Motor neuron (in vitro differentiated cells): ENCODE measurements at regions of chr7 and their contacts with region 1.

Region 1: GRCh38 chr7:156949541-156950380 is at the start of gene NOM1:
- ATAC-seq: peak; percentile 67 to 95 (median 93)
- H3K4me3 ChIP-seq: peak within 1 kb of the TSS; percentile 82 to 96 (median 85)
- H3K27ac ChIP-seq: peak within 1 kb of the TSS; percentile 62 to 88
- H3K4me1 ChIP-seq: peaks cover 5 to 16% of the 10 kb centered on the region in 2 donors
- total RNA-seq, gene NOM1: 7.2 to 44.4 (median 9.5) TPM

Region 2: DNA sequence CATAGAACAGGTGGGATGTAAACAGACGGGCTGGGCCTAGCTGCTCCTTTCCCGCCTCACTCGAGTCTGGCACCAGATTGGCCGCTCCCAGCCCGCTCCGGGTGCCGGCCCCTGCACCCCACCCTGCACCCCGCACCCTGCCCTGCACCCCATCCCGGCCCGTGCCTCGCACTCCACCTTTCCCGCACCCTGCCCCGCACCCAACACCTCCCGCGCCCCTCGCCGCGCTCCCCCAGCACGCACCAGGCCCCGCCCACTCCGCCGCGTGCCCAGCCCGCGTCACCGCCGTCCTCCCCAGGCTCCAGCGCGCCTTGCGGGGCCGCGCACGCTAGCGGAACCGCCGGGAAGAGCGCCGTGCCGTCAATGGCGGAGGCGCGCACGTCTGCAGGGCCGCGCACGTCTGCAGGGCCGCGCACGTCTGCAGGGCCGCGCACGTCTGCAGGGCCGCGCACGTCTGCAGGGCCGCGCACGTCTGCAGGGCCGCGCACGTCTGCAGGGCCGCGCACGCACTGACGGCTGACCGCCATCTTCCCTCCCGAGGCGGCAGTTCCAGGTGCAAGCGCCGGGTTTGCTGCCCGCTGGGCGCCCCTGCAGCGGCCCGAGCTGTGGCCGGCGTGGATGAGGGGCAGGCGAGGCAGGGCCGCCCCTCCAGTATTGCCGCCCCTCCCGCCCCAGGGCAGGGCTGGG is 188.8 kb after region 1 on chr7 and contains the start of gene UBE3C:
- in situ Hi-C with region 1: loop called in 1 of 9 experiments (anchors 25 kb)
- ATAC-seq: peak; percentile 82 to 91 (median 88)
- H3K4me3 ChIP-seq: peak within 1 kb of the TSS; percentile 64 to 96 (median 70)
- H3K27ac ChIP-seq: peak within 1 kb of the TSS; percentile 91 to 97
- H3K4me1 ChIP-seq: peaks cover 6 to 19% of the 10 kb centered on the region in 2 donors
- total RNA-seq, gene UBE3C: 21.8 to 111 (median 34.1) TPM

Region 3: GRCh38 chr7:157273208-157274093 is 323.7 kb after region 1 on chr7:
- in situ Hi-C with region 1: loop called in 3 of 9 experiments (anchors 25 kb)
- ATAC-seq: peak; percentile 54 to 78 (median 72)
- H3K4me3 ChIP-seq: no peak overlapping the region
- H3K27ac ChIP-seq: no peak overlapping the region
- H3K4me1 ChIP-seq: no peaks in the 10 kb centered on the region

Region 4: GRCh38 chr7:157412021-157412443 is 462.3 kb after region 1 on chr7:
- in situ Hi-C with region 1: no loop called
- ATAC-seq: peak in 1 of 8 experiments; percentile 42
- H3K4me3 ChIP-seq: no peak overlapping the region
- H3K27ac ChIP-seq: no peak overlapping the region
- H3K4me1 ChIP-seq: no peaks in the 10 kb centered on the region